ENCODE measurements at regions of chr6 and their contacts with region 1.

Region 1: GRCh38 chr6:39302669-39303424 is 11.4 kb downstream of the KCNK17 start:
- DNase-seq: peak; percentile 87 to 93 (median 88)
- ATAC-seq: peak; percentile 90
- H3K4me3 ChIP-seq: no peak overlapping the region
- H3K27ac ChIP-seq: no peak overlapping the region
- H3K4me1 ChIP-seq: no peaks in the 10 kb centered on the region
- H3K27me3 ChIP-seq: no peaks in the 10 kb centered on the region
- CTCF ChIP-seq: peak; percentile 74 to 96 (median 93)
- POLR2A ChIP-seq: no peak

Region 2: DNA sequence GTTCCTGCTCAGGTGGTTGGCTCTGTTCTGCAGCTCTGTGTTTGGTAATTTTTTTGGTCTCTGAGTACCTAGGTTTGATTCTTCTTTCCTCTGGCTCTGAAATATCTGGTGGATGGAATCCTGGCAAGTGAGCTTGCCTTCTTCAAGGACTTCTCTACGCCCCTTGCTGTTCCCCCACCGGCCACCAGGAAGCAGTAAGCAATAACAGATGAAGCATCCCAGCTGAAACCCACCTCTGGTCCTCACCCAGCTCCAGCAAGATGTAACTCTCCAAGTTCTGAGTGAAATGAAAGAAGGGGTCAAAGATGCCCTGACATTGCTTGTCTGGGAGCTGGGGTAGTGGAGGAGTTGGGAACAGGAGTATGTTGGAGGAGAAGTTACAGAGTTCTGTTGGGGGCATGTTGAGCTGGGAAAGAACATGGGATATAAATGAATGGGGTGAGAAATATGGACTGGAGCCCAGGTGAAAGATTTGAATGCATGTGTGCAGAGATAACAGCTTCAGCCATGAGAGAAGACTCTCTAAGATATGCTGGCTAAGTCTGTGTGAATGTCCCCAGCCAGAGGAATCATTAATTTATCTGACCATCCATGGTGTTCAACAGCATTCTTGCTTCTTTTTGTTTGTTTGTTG is 305.6 kb before region 1 on chr6:
- intact Hi-C with region 1: loop called (anchors 10 kb)
- DNase-seq: peak; percentile 44 to 73 (median 49)
- ATAC-seq: no peak
- H3K4me3 ChIP-seq: no peak overlapping the region
- H3K27ac ChIP-seq: no peak overlapping the region
- H3K4me1 ChIP-seq: no peaks in the 10 kb centered on the region
- H3K27me3 ChIP-seq: no peaks in the 10 kb centered on the region
- CTCF ChIP-seq: peak; percentile 27 to 65 (median 50)
- POLR2A ChIP-seq: no peak

Region 3: GRCh38 chr6:39166189-39166911 is 136.5 kb before region 1 on chr6:
- intact Hi-C with region 1: loop called (anchors 2 kb)
- DNase-seq: peak; percentile 79 to 86 (median 84)
- ATAC-seq: peak; percentile 63
- H3K4me3 ChIP-seq: no peak overlapping the region
- H3K27ac ChIP-seq: no peak overlapping the region
- H3K4me1 ChIP-seq: peaks cover 43% of the 10 kb centered on the region
- H3K27me3 ChIP-seq: no peaks in the 10 kb centered on the region
- CTCF ChIP-seq: peak; percentile 87 to 95 (median 92)
- POLR2A ChIP-seq: no peak